Motor neuron (in vitro differentiated cells): ENCODE measurements at regions of chr6 and their contacts with region 1.

Region 1: DNA sequence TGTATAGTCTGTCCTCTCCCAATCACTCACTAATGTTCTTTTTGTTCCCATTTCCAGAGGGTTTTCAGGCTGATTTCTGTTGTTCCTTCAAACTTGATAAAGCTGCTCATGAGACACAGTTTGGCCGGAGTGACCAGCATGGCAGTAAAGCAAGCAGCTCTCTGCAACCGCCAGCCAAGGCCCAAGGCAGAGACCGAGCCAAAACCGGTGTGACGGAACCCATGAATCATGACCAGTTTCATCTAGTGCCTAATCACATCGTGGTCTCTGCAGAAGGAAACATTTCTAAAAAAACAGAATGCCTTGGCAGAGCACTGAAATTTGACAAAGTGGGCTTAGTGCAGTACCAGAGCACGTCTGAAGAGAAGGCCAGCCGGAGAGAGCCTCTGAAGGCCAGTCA is 14.8 kb upstream of the RPL7L1 start:
- ATAC-seq: no peak
- H3K4me3 ChIP-seq: no peak overlapping the region
- H3K27ac ChIP-seq: no peak overlapping the region
- H3K4me1 ChIP-seq: no peaks in the 10 kb centered on the region

Region 2: DNA sequence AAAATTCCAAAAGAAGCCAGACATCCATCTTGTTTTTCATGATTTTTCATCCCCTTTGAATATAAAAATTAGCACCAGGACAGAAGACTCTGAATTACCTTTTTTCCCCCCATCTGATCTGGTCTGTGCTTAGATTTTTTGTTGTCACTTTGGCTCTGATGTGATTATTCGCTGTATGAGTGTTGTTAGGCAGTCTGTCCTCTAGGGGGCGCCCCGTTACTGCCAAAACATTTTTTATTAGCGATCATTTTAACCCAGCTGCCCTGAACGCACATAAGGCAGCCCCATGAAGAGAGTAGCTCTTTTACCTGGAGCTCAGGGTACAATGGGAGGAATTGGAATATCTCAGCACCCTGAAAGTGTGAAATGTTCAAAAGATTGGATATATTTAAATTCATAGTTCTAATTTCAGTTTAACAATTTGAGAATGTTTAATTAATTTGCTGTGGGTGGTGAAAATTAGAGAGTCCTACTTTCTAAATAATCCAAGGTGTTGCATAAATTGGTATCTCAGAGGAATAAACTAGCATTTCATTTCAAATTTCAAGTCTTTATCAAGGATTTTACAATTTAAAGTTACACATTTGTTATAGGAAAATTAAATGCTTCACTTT is 203.0 kb before region 1 on chr6:
- in situ Hi-C with region 1: loop called in 4 of 9 experiments (anchors 25 kb)
- ATAC-seq: peak; percentile 65 to 79 (median 70)
- H3K4me3 ChIP-seq: no peak overlapping the region
- H3K27ac ChIP-seq: no peak overlapping the region
- H3K4me1 ChIP-seq: no peaks in the 10 kb centered on the region

Region 3: DNA sequence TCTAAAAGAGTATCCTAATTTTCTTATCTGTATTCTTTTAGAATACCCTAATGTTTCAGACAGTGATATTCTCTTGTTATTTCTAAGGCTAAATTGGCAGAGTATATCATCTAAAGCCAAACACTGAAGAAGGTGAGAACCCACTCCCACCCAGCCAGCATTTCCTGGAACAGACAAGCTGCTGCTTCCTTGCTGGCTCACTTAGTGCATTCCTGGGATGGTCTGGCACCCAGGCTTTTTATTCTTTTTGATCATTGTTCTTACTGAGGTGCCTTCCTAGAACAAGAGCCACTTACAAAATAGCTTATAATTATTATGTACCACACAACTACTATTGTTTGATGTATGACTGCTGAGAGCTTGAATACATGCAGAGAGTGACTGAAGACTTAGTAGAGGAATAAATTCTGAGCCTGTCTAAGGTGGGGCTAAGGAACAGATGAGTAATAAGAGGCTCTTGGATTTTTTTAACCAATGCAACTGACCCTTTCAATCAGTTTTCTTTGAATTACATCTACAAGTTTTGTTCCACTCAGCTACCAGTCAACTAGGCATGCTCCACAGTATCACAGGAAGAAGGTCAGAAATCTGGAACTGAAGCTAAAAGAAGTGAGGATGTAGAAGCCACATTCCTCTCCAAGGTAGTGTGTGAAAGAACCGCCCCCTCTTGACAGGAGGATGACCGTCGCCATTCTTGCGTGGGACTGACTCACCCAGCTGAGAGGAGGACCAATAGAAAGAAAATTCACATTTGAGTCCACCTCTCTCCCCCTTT is 172.3 kb before region 1 on chr6:
- in situ Hi-C with region 1: loop called in 1 of 9 experiments (anchors 25 kb)
- ATAC-seq: peak in 4 of 8 experiments; percentile 10 to 91 (median 63)
- H3K4me3 ChIP-seq: no peak overlapping the region
- H3K27ac ChIP-seq: no peak overlapping the region
- H3K4me1 ChIP-seq: no peaks in the 10 kb centered on the region

Region 4: GRCh38 chr6:43524483-43524961 is 659.9 kb after region 1 on chr6:
- in situ Hi-C with region 1: no loop called
- ATAC-seq: peak in 1 of 8 experiments; percentile 8
- H3K4me3 ChIP-seq: no peak overlapping the region
- H3K27ac ChIP-seq: no peak overlapping the region
- H3K4me1 ChIP-seq: no peaks in the 10 kb centered on the region